GM12878 (cell line): ENCODE measurements at regions of chr14 and their contacts with region 1.

Region 1: DNA sequence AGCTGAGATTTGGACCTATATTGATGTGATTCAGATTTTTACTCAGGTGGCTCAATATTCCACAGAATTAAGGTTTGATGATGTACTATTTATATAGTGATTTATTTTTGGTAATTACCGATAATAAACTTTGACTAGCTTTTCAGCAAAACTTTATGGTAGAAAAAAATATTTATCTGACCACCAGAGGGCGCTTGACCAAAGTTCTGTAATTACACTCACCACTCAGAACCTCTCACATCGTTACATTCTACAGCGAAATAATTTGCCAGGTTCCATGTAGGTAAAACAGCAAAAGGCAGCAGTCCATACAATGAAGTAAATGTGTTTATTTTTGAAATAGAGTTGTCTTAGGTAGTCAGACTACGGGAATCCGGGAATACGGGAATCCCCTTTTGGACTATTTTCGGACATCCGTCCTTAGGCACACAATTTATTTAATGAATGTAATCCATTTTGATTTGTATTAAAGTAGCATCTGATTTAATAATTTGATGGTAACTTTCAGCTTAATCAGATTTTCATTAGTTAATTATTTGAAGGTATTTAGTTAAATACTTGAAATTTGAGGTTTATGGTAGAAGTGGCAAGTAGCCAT is 143.0 kb upstream of the DDHD1 start:
- DNase-seq: no peak
- ATAC-seq: peak; percentile 63
- H3K4me3 ChIP-seq: no peak overlapping the region
- H3K27ac ChIP-seq: no peak overlapping the region
- H3K4me1 ChIP-seq: no peaks in the 10 kb centered on the region
- H3K27me3 ChIP-seq: no peaks in the 10 kb centered on the region
- CTCF ChIP-seq: peak; percentile 49 to 55 (median 52); a peak in 5 of 6 replicates
- EP300 ChIP-seq: no peak
- POLR2A ChIP-seq: no peak
- RAD21 ChIP-seq: peak; percentile 32; the same call in 1 of the 2 replicates

Region 2: GRCh38 chr14:53190938-53191337 is 105.1 kb before region 1 on chr14:
- CTCF ChIA-PET with region 1: interaction called, 14 read pairs
- POLR2A ChIA-PET with region 1: no interaction called
- RAD21 ChIA-PET with region 1: no interaction called
- SMC1A ChIA-PET with region 1: no interaction called
- in situ Hi-C with region 1: no loop called
- intact Hi-C with region 1: no loop called
- DNase-seq: no peak
- ATAC-seq: peak; percentile 71
- H3K4me3 ChIP-seq: no peak overlapping the region
- H3K27ac ChIP-seq: no peak overlapping the region
- H3K4me1 ChIP-seq: no peaks in the 10 kb centered on the region
- H3K27me3 ChIP-seq: no peaks in the 10 kb centered on the region
- CTCF ChIP-seq: no peak
- EP300 ChIP-seq: no peak
- POLR2A ChIP-seq: no peak
- RAD21 ChIP-seq: no peak

Region 3: GRCh38 chr14:53278930-53279506 is 17.1 kb before region 1 on chr14:
- CTCF ChIA-PET with region 1: interaction called, 13 read pairs
- POLR2A ChIA-PET with region 1: no interaction called
- RAD21 ChIA-PET with region 1: no interaction called
- SMC1A ChIA-PET with region 1: interaction called, 4 read pairs
- in situ Hi-C with region 1: no loop called
- intact Hi-C with region 1: no loop called
- DNase-seq: no peak
- ATAC-seq: no peak
- H3K4me3 ChIP-seq: no peak overlapping the region
- H3K27ac ChIP-seq: no peak overlapping the region
- H3K4me1 ChIP-seq: no peaks in the 10 kb centered on the region
- H3K27me3 ChIP-seq: no peaks in the 10 kb centered on the region
- CTCF ChIP-seq: no peak
- EP300 ChIP-seq: no peak
- POLR2A ChIP-seq: no peak
- RAD21 ChIP-seq: no peak

Region 4: GRCh38 chr14:53285805-53286204 is 10.3 kb before region 1 on chr14:
- CTCF ChIA-PET with region 1: interaction called, 10 read pairs
- POLR2A ChIA-PET with region 1: no interaction called
- RAD21 ChIA-PET with region 1: no interaction called
- SMC1A ChIA-PET with region 1: interaction called, 3 read pairs
- in situ Hi-C with region 1: no loop called
- intact Hi-C with region 1: no loop called
- DNase-seq: no peak
- ATAC-seq: no peak
- H3K4me3 ChIP-seq: no peak overlapping the region
- H3K27ac ChIP-seq: no peak overlapping the region
- H3K4me1 ChIP-seq: no peaks in the 10 kb centered on the region
- H3K27me3 ChIP-seq: no peaks in the 10 kb centered on the region
- CTCF ChIP-seq: peak in 1 of 3 experiments; percentile 11; a peak in 1 of 6 replicates
- EP300 ChIP-seq: no peak
- POLR2A ChIP-seq: no peak
- RAD21 ChIP-seq: peak; percentile 31; the same call in 1 of the 2 replicates

Region 5: GRCh38 chr14:53306267-53306721 is 10.2 kb after region 1 on chr14:
- CTCF ChIA-PET with region 1: interaction called, 48 read pairs
- POLR2A ChIA-PET with region 1: no interaction called
- RAD21 ChIA-PET with region 1: interaction called, 3 read pairs
- SMC1A ChIA-PET with region 1: interaction called, 18 read pairs
- in situ Hi-C with region 1: no loop called
- intact Hi-C with region 1: no loop called
- DNase-seq: no peak
- ATAC-seq: peak; percentile 77
- H3K4me3 ChIP-seq: peak overlapping the region; percentile 74; the same call in 1 of the 2 replicates
- H3K27ac ChIP-seq: no peak overlapping the region
- H3K4me1 ChIP-seq: peaks cover 6% of the 10 kb centered on the region
- H3K27me3 ChIP-seq: no peaks in the 10 kb centered on the region
- CTCF ChIP-seq: peak; percentile 67 to 80 (median 69); a peak in 5 of 6 replicates
- EP300 ChIP-seq: no peak
- POLR2A ChIP-seq: no peak
- RAD21 ChIP-seq: peak; percentile 93

Region 6: GRCh38 chr14:53325176-53325806 is 29.2 kb after region 1 on chr14:
- CTCF ChIA-PET with region 1: interaction called, 13 read pairs
- POLR2A ChIA-PET with region 1: no interaction called
- RAD21 ChIA-PET with region 1: interaction called, 4 read pairs
- SMC1A ChIA-PET with region 1: interaction called, 15 read pairs
- in situ Hi-C with region 1: no loop called
- intact Hi-C with region 1: no loop called
- DNase-seq: no peak
- ATAC-seq: peak; percentile 34; the same call in 1 of the 3 replicates
- H3K4me3 ChIP-seq: no peak overlapping the region
- H3K27ac ChIP-seq: no peak overlapping the region
- H3K4me1 ChIP-seq: no peaks in the 10 kb centered on the region
- H3K27me3 ChIP-seq: no peaks in the 10 kb centered on the region
- CTCF ChIP-seq: peak in 2 of 3 experiments; percentile 44 to 49; a peak in 4 of 6 replicates
- EP300 ChIP-seq: no peak
- POLR2A ChIP-seq: no peak
- RAD21 ChIP-seq: peak; percentile 55